Heart left ventricle (tissue), 16 donors: ENCODE measurements at regions of chr12 and their contacts with region 1.

Region 1: GRCh38 chr12:106136263-106136662 is 2.5 kb downstream of the NUAK1 start:
- DNase-seq: peak; percentile 87 to 92 (median 89)
- ATAC-seq: peak in 2 of 4 donors; percentile 10 to 47
- H3K4me3 ChIP-seq: peak overlapping the region; percentile 73 to 96 (median 90)
- H3K27ac ChIP-seq: peak overlapping the region; percentile 95 to 100 (median 97)
- H3K4me1 ChIP-seq: peaks cover 3 to 67% (median 50%) of the 10 kb centered on the region in 12 donors
- H3K27me3 ChIP-seq: peaks cover 0 to 33% (median 0%) of the 10 kb centered on the region in 9 donors
- CTCF ChIP-seq: peak; percentile 82 to 96 (median 89)
- POLR2A ChIP-seq: peak in 1 of 2 donors; percentile 36

Region 2: DNA sequence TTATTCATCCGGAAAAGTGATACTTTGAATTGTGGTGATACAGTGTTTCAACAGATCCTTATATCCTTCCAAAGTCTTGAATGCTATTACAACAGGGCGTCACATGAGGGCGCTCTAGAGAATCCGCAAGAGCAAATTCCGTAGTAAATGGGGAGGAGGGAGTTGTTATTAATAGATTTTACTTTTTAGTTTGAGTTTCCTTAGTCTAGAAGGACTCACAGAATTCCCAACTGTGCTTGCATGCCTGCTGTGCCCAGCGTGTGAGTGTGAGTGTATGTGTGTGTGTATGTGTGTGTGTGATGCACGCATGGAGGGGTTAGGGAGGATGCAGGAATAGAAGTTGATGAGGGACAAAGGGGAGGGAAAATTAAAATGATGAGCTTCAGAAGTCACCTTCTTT is 430.5 kb before region 1 on chr12:
- intact Hi-C with region 1: loop called (anchors 2 to 5 kb)
- DNase-seq: peak in 4 of 5 donors; percentile 32 to 58 (median 46)
- ATAC-seq: peak; percentile 17 to 72 (median 60)
- H3K4me3 ChIP-seq: no peak overlapping the region
- H3K27ac ChIP-seq: peak overlapping the region in 9 of 12 donors; percentile 24 to 61 (median 55)
- H3K4me1 ChIP-seq: peaks cover 0 to 19% (median 11%) of the 10 kb centered on the region in 12 donors
- H3K27me3 ChIP-seq: no peaks in the 10 kb centered on the region
- CTCF ChIP-seq: peak; percentile 72 to 92 (median 86)
- POLR2A ChIP-seq: no peak

Region 3: GRCh38 chr12:105852951-105853350 is 283.3 kb before region 1 on chr12:
- intact Hi-C with region 1: loop called in 1 of 10 experiments (anchors 10 kb)
- DNase-seq: peak in 3 of 5 donors; percentile 54 to 55 (median 54)
- ATAC-seq: peak; percentile 77 to 95 (median 82)
- H3K4me3 ChIP-seq: peak overlapping the region in 8 of 12 donors; percentile 0 to 35 (median 18)
- H3K27ac ChIP-seq: peak overlapping the region in 9 of 12 donors; percentile 5 to 73 (median 20)
- H3K4me1 ChIP-seq: peaks cover 0 to 28% (median 9%) of the 10 kb centered on the region in 12 donors
- H3K27me3 ChIP-seq: no peaks in the 10 kb centered on the region
- CTCF ChIP-seq: no peak
- POLR2A ChIP-seq: no peak

Region 4: GRCh38 chr12:105967038-105967776 is 169.1 kb before region 1 on chr12:
- intact Hi-C with region 1: loop called in 5 of 10 experiments (anchors 5 to 10 kb)
- DNase-seq: no peak
- ATAC-seq: peak; percentile 83 to 93 (median 89)
- H3K4me3 ChIP-seq: no peak overlapping the region
- H3K27ac ChIP-seq: peak overlapping the region; percentile 45 to 91 (median 80)
- H3K4me1 ChIP-seq: peaks cover 0 to 28% (median 16%) of the 10 kb centered on the region in 12 donors
- H3K27me3 ChIP-seq: no peaks in the 10 kb centered on the region
- CTCF ChIP-seq: no peak
- POLR2A ChIP-seq: no peak

Region 5: GRCh38 chr12:105992849-105993740 is 143.2 kb before region 1 on chr12:
- intact Hi-C with region 1: no loop called
- DNase-seq: no peak
- ATAC-seq: peak in 3 of 4 donors; percentile 33 to 58 (median 38)
- H3K4me3 ChIP-seq: no peak overlapping the region
- H3K27ac ChIP-seq: no peak overlapping the region
- H3K4me1 ChIP-seq: peaks cover 0 to 12% (median 0%) of the 10 kb centered on the region in 12 donors
- H3K27me3 ChIP-seq: no peaks in the 10 kb centered on the region
- CTCF ChIP-seq: no peak
- POLR2A ChIP-seq: no peak

Region 6: GRCh38 chr12:106090591-106091411 is 45.5 kb before region 1 on chr12:
- intact Hi-C with region 1: loop called in 2 of 10 experiments (anchors 5 kb)
- DNase-seq: peak in 4 of 5 donors; percentile 71 to 80 (median 73)
- ATAC-seq: peak; percentile 85 to 91 (median 90)
- H3K4me3 ChIP-seq: no peak overlapping the region
- H3K27ac ChIP-seq: peak overlapping the region; percentile 66 to 91 (median 84)
- H3K4me1 ChIP-seq: peaks cover 8 to 87% (median 56%) of the 10 kb centered on the region in 12 donors
- H3K27me3 ChIP-seq: no peaks in the 10 kb centered on the region
- CTCF ChIP-seq: no peak
- POLR2A ChIP-seq: no peak